Activated naive CD4-positive, alpha-beta T cell treated with anti-CD3 and anti-CD28 coated beads for 36 hours (primary cell): ENCODE measurements at regions of chr1 and their contacts with region 1.

Region 1: GRCh38 chr1:150765296-150765976 is at the start of gene CTSS:
- DNase-seq: no peak
- H3K4me3 Mint-ChIP-seq: peak within 1 kb of the TSS; percentile 90
- H3K27ac Mint-ChIP-seq: peak within 1 kb of the TSS; percentile 94
- H3K4me1 Mint-ChIP-seq: peaks cover 48% of the 10 kb centered on the region
- H3K27me3 Mint-ChIP-seq: no peaks in the 10 kb centered on the region
- total RNA-seq, gene CTSS: 37.0 to 37.7 TPM

Region 2: DNA sequence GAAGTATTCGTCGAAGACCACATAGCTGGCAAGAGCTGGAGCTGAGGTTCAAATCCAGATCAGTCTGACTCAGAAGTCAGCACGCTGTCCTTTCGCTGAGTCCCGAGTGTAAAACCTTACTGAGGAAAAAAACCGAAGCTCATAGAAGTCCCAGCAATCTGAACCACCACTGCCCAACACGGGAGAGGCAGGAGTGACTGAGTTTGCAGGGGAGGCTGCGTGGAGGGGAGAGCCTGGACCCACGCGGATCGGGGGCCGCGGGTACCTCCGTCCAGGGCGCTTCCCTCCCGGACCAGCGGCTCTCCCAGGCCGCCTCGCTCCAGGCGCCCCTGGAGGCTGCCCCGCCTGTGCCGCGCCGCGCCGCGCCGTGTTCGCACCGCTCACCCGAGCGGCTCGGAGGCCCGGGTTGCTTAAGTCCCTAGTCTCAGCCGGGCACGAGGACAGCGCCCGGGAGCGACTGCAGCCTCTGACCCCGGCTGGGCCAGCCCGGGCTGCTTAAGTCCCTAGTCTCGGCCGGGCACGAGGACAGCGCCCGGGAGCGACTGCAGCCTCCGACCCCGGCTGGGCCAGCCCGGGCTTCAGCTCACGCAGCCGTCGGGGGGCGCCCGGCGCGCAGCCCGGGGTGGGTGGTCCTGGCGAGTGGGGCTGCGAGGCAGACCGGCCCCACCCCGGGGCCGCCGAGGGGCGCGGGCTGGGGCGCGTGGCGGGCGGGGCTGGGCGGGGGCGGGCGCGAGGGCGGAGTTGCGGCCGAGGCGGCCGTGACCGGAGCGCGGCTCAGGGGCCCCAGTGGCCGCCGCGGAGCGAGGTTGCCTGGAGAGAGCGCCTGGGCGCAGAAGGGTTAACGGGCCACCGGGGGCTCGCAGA is 216.6 kb before region 1 on chr1 and contains the start of gene ADAMTSL4:
- CTCF ChIA-PET with region 1: no interaction called
- intact Hi-C with region 1: loop called (anchors 1 kb)
- DNase-seq: peak; percentile 47
- H3K4me3 Mint-ChIP-seq: peak within 1 kb of the TSS; percentile 76
- H3K27ac Mint-ChIP-seq: no peak within 1 kb of the TSS
- H3K4me1 Mint-ChIP-seq: peaks cover 32% of the 10 kb centered on the region
- H3K27me3 Mint-ChIP-seq: peaks cover 33% of the 10 kb centered on the region
- total RNA-seq, gene ADAMTSL4: 1.3 to 2.0 TPM

Region 3: GRCh38 chr1:150642296-150642695 is 123.1 kb before region 1 on chr1:
- CTCF ChIA-PET with region 1: no interaction called
- intact Hi-C with region 1: no loop called
- DNase-seq: no peak
- H3K4me3 Mint-ChIP-seq: no peak overlapping the region
- H3K27ac Mint-ChIP-seq: no peak overlapping the region
- H3K4me1 Mint-ChIP-seq: no peaks in the 10 kb centered on the region
- H3K27me3 Mint-ChIP-seq: no peaks in the 10 kb centered on the region

Region 4: GRCh38 chr1:150730130-150730721 is 35.2 kb before region 1 on chr1:
- CTCF ChIA-PET with region 1: no interaction called
- intact Hi-C with region 1: no loop called
- DNase-seq: no peak
- H3K4me3 Mint-ChIP-seq: no peak overlapping the region
- H3K27ac Mint-ChIP-seq: no peak overlapping the region
- H3K4me1 Mint-ChIP-seq: no peaks in the 10 kb centered on the region
- H3K27me3 Mint-ChIP-seq: no peaks in the 10 kb centered on the region

Region 5: DNA sequence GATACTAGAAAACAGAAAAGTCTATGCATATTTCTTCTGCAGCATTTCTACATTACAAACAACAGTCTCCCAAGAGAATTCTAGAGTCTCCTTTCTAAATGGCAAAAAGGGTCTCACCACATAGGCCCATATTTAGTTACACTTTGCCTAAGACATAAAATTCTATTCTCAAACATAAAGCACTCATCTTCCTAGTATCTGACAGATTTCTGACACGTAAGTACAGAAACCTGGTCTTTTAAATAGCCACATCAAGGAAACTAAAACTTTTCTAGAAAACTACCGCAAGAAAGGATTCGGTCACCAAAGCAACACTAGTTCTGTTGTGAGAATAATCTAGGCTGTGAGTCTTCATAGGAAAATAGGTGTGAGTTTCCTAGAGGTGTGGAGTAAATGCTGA is 76.2 kb after region 1 on chr1:
- CTCF ChIA-PET with region 1: no interaction called
- intact Hi-C with region 1: loop called (anchors 2 kb)
- DNase-seq: no peak
- H3K4me3 Mint-ChIP-seq: no peak overlapping the region
- H3K27ac Mint-ChIP-seq: no peak overlapping the region
- H3K4me1 Mint-ChIP-seq: peaks cover 35% of the 10 kb centered on the region
- H3K27me3 Mint-ChIP-seq: no peaks in the 10 kb centered on the region